IMR-90 (cell line): ENCODE measurements at regions of chr12 and their contacts with region 1.

Region 1: DNA sequence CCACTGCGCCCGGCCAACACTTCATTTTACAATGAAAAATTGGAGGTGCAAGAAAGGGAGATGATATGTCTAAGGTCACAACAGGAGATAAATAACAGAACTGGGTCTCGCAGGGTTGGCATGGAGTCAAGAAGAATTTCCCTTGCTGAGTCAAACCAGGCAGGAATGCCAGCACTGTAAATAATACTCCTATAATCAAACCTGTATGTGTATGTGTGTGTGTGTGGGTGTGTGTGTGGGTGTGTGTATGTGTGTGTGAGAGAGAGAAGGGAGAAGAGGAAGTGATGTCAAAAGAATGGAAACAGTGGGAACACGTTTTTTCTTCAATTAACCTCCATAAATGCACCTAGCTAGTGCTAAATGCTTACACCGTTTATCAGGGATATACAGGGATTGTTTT is 70.4 kb downstream of the TMEM116 start:
- DNase-seq: peak; percentile 94
- ATAC-seq: peak; percentile 81
- H3K4me3 ChIP-seq: no peak overlapping the region
- H3K27ac ChIP-seq: no peak overlapping the region
- H3K4me1 ChIP-seq: peaks cover 4% of the 10 kb centered on the region
- H3K27me3 ChIP-seq: no peaks in the 10 kb centered on the region
- CTCF ChIP-seq: no peak
- POLR2A ChIP-seq: no peak
- RAD21 ChIP-seq: no peak

Region 2: GRCh38 chr12:112012775-112013600 is 70.4 kb after region 1 on chr12 and contains the starts of genes ERP29 and TMEM116:
- CTCF ChIA-PET with region 1: interaction called, 3 read pairs
- POLR2A ChIA-PET with region 1: no interaction called
- dilution Hi-C with region 1: no loop called
- in situ Hi-C with region 1: no loop called
- intact Hi-C with region 1: loop called (anchors 1 kb)
- DNase-seq: peak; percentile 98
- ATAC-seq: peak; percentile 89
- H3K4me3 ChIP-seq: peak within 1 kb of the TSS; percentile 79
- H3K27ac ChIP-seq: peak within 1 kb of the TSS; percentile 80
- H3K4me1 ChIP-seq: peaks cover 1% of the 10 kb centered on the region; the same call in 1 of the 2 replicates
- H3K27me3 ChIP-seq: no peaks in the 10 kb centered on the region
- CTCF ChIP-seq: peak; percentile 60
- POLR2A ChIP-seq: peak; percentile 90
- RAD21 ChIP-seq: peak; percentile 51
- total RNA-seq, gene ERP29: 30.3 and 36.1 TPM in 2 replicates
- total RNA-seq, gene TMEM116: 4.7 and 8.4 TPM in 2 replicates

Region 3: GRCh38 chr12:112125250-112125999 is 182.9 kb after region 1 on chr12 and contains the start of gene TRAFD1:
- CTCF ChIA-PET with region 1: no interaction called
- POLR2A ChIA-PET with region 1: no interaction called
- dilution Hi-C with region 1: no loop called
- in situ Hi-C with region 1: no loop called
- intact Hi-C with region 1: loop called (anchors 10 kb)
- DNase-seq: peak; percentile 96
- ATAC-seq: peak; percentile 87
- H3K4me3 ChIP-seq: peak within 1 kb of the TSS; percentile 83
- H3K27ac ChIP-seq: peak within 1 kb of the TSS; percentile 92
- H3K4me1 ChIP-seq: peaks cover 19% of the 10 kb centered on the region
- H3K27me3 ChIP-seq: no peaks in the 10 kb centered on the region
- CTCF ChIP-seq: no peak
- POLR2A ChIP-seq: peak; percentile 97
- RAD21 ChIP-seq: no peak; the same call in 1 of the 2 replicates
- total RNA-seq, gene TRAFD1: 69.7 and 70.4 TPM in 2 replicates

Region 4: DNA sequence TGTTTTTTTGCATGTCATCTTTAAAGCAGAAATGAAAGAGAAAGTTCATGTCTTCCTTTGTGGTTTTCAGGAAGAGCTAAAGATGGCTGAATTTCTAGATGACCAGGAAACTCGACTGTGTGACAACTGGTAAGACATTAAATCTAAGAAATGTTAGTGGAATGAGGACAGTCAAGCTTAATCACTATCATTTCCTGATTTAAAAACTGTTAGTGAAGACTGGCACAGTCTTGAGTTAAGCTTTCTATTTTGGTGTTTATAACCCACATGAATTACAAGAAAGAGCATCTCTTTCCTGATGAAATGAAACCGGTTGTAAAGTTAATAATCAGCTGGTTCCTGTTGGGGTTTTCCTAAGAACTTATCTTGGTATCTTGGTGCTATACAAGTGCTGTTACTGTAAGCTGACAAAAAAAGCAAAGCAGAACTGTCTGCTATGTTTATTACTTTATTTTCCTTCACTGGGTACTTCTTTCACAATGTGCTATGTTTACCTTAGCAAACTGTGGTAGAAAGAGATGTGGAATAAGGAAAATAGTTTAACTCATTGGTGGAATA is 188.0 kb after region 1 on chr12:
- CTCF ChIA-PET with region 1: no interaction called
- POLR2A ChIA-PET with region 1: interaction called, 10 read pairs
- dilution Hi-C with region 1: no loop called
- in situ Hi-C with region 1: no loop called
- intact Hi-C with region 1: loop called (anchors 10 kb)
- DNase-seq: peak; percentile 36
- ATAC-seq: peak; percentile 28
- H3K4me3 ChIP-seq: peak overlapping the region; percentile 25; the same call in 1 of the 2 replicates
- H3K27ac ChIP-seq: peak overlapping the region; percentile 52; the same call in 1 of the 2 replicates
- H3K4me1 ChIP-seq: peaks cover 8% of the 10 kb centered on the region
- H3K27me3 ChIP-seq: no peaks in the 10 kb centered on the region
- CTCF ChIP-seq: no peak
- POLR2A ChIP-seq: no peak
- RAD21 ChIP-seq: no peak

Region 5: GRCh38 chr12:112482733-112483132 is 540.2 kb after region 1 on chr12:
- CTCF ChIA-PET with region 1: no interaction called
- POLR2A ChIA-PET with region 1: no interaction called
- dilution Hi-C with region 1: no loop called
- in situ Hi-C with region 1: no loop called
- intact Hi-C with region 1: no loop called
- DNase-seq: no peak
- ATAC-seq: no peak
- H3K4me3 ChIP-seq: no peak overlapping the region
- H3K27ac ChIP-seq: no peak overlapping the region
- H3K4me1 ChIP-seq: no peaks in the 10 kb centered on the region
- H3K27me3 ChIP-seq: no peaks in the 10 kb centered on the region
- CTCF ChIP-seq: no peak
- POLR2A ChIP-seq: no peak
- RAD21 ChIP-seq: no peak